Activated naive CD4-positive, alpha-beta T cell treated with anti-CD3 and anti-CD28 coated beads for 36 hours (primary cell): ENCODE measurements at regions of chr19 and their contacts with region 1.

Region 1: DNA sequence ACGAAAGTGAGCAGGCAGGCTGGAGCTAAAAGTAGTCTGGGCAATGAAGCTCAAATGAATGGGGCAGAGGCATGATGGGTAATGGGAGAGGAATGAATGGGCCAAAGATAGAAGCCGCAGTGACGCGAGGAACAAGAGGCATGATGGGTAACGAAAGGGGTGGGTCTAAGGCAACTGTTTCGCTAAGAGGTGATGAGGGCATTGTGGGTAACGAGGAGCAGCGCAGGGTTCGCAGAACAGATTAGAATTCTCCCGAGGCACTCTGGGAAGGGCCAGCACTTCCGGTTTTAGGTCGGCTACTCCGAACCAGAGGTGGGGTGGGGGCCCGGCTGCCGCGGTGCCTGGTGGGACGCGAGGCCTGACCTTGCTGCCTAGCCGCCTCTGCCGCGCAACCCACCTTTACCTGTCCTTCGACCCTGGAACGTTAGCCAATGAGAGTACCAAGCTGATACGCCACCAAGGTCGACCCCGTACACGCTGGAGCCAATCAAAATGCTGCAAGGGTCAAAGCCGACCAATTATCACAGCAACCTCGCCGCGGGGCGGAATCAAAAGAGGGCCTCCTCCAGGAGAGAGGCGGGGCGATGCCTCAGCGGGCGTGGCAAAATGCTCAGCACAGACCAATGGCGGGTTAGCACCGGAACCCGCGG is 563 bp upstream of the TOMM40 start:
- DNase-seq: peak; percentile 100
- H3K4me3 Mint-ChIP-seq: peak overlapping the region; percentile 85
- H3K27ac Mint-ChIP-seq: peak overlapping the region; percentile 94
- H3K4me1 Mint-ChIP-seq: peaks cover 37% of the 10 kb centered on the region
- H3K27me3 Mint-ChIP-seq: no peaks in the 10 kb centered on the region

Region 2: DNA sequence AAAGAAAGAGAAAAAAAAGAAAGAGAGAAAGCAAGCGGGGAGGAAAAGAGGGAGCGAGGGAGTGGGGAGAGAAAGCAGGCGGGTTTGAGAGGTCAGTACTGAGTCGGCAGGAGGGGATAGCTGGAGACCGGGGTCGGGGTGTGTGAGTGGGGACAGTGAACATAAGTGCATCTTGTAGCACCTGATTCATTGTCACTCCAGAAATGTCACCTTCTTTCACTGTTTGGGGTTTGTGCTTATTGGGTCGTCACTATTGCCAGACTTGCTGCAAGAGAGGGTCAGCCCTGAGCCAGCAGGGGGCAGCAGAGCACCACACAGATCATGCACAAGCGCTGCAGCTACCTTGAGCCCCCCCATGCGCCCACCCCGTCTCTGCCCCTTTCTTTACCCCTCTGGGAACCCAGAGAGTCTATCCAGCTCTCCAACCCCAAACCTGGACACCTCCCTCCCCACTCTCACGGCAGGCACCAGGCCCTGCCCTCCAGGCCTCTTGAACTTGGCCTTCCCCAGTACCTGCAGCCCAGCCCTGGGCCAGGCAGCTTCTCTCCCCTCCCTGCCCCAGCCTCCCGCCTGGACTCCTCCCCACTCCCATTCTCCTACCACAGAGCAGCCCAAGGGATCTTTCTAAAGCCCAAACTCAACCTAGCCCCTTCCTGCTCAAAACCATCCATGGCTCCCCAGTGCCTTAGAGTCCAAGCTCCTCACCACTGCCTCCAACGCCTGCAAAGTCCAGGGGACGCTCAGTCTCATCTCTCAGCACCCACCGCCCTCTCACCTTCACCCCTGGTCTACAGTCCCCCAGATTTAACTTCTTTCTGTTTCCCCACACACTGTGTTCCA is 201.2 kb before region 1 on chr19:
- CTCF ChIA-PET with region 1: no interaction called
- intact Hi-C with region 1: loop called (anchors 2 kb)
- DNase-seq: peak; percentile 86
- H3K4me3 Mint-ChIP-seq: no peak overlapping the region
- H3K27ac Mint-ChIP-seq: no peak overlapping the region
- H3K4me1 Mint-ChIP-seq: peaks cover 42% of the 10 kb centered on the region
- H3K27me3 Mint-ChIP-seq: peaks cover 6% of the 10 kb centered on the region

Region 3: DNA sequence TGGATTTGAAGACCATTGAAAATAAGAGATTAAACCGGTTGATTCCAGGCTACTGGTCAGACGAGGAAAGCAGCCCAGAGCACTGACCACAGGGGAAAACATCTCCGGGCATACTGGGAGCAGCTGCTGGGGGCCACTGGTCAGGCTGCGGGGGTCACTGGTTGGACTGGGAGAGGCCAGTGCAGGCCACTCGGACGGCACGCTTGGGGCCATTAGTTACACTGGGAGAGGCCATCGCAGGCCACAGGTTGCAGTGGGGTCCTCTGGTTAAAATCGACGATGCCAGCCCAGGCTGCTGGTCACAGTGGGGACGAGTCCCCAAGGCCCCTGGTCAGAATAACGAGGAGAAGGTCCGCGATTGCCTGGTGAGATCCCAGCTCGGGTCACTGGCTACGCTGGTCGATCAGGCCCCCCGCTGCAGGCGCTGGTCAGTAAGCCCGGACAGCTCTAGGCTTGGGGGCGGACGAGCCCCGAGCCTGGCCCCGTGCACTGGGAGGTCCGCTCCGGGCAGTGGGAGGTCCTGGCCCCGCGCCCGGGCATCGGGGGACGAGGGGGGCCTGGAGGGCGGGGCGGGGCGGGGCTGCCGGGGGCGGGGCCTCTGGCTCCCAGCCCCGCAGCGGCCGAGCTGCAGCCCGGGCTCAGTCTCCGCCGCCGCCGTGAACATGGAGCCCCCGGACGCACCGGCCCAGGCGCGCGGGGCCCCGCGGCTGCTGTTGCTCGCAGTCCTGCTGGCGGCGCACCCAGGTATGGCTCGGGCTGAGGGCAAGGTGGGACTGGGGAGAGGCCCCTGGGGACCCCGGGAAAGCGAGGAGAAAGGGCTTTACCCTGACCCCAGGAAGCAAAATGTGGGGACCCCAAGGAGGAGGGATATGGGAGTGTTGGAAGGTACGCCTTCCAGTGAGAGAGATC is 81.8 kb before region 1 on chr19 and contains the start of gene BCAM:
- CTCF ChIA-PET with region 1: no interaction called
- intact Hi-C with region 1: no loop called
- DNase-seq: no peak
- H3K4me3 Mint-ChIP-seq: no peak within 1 kb of the TSS
- H3K27ac Mint-ChIP-seq: no peak within 1 kb of the TSS
- H3K4me1 Mint-ChIP-seq: peaks cover 6% of the 10 kb centered on the region
- H3K27me3 Mint-ChIP-seq: peaks cover 24% of the 10 kb centered on the region
- total RNA-seq, gene BCAM: not detected

Region 4: GRCh38 chr19:44845612-44846454 is 44.7 kb before region 1 on chr19 and contains the start of gene NECTIN2:
- CTCF ChIA-PET with region 1: interaction called, 4 read pairs
- intact Hi-C with region 1: loop called (anchors 1 kb)
- DNase-seq: peak; percentile 95
- H3K4me3 Mint-ChIP-seq: peak within 1 kb of the TSS; percentile 83
- H3K27ac Mint-ChIP-seq: no peak within 1 kb of the TSS
- H3K4me1 Mint-ChIP-seq: peaks cover 20% of the 10 kb centered on the region
- H3K27me3 Mint-ChIP-seq: peaks cover 18% of the 10 kb centered on the region
- total RNA-seq, gene NECTIN2: 0.88 to 1.1 TPM

Region 5: GRCh38 chr19:44954824-44955586 is 64.5 kb after region 1 on chr19 and contains the start of gene CLPTM1:
- CTCF ChIA-PET with region 1: interaction called, 8 read pairs
- intact Hi-C with region 1: loop called (anchors 1 kb)
- DNase-seq: peak; percentile 98
- H3K4me3 Mint-ChIP-seq: peak within 1 kb of the TSS; percentile 98
- H3K27ac Mint-ChIP-seq: peak within 1 kb of the TSS; percentile 98
- H3K4me1 Mint-ChIP-seq: peaks cover 48% of the 10 kb centered on the region
- H3K27me3 Mint-ChIP-seq: no peaks in the 10 kb centered on the region
- total RNA-seq, gene CLPTM1: 32.4 to 34.6 TPM

Region 6: GRCh38 chr19:45038931-45039893 is 148.7 kb after region 1 on chr19 and contains the start of gene CLASRP:
- CTCF ChIA-PET with region 1: no interaction called
- intact Hi-C with region 1: loop called (anchors 2 kb)
- DNase-seq: peak; percentile 91
- H3K4me3 Mint-ChIP-seq: peak within 1 kb of the TSS; percentile 91
- H3K27ac Mint-ChIP-seq: peak within 1 kb of the TSS; percentile 90
- H3K4me1 Mint-ChIP-seq: peaks cover 33% of the 10 kb centered on the region
- H3K27me3 Mint-ChIP-seq: no peaks in the 10 kb centered on the region
- total RNA-seq, gene CLASRP: 106 to 113 TPM